ENCODE measurements at regions of chr1 and their contacts with region 1.

Region 1: GRCh38 chr1:8348777-8349491 is 31.0 kb downstream of the SLC45A1 start:
- DNase-seq: peak; percentile 56 to 58
- ATAC-seq: peak; percentile 60 to 75; a peak in 5 of 6 replicates
- H3K4me3 ChIP-seq: no peak overlapping the region
- H3K27ac ChIP-seq: peak overlapping the region; percentile 73 to 82; a peak in 5 of 6 replicates
- H3K4me1 ChIP-seq: peaks cover 17% of the 10 kb centered on the region
- CTCF ChIP-seq: peak; percentile 78
- EP300 ChIP-seq: no peak
- POLR2A ChIP-seq: no peak
- RAD21 ChIP-seq: peak; percentile 87 to 90

Region 2: GRCh38 chr1:7983086-7983778 is 365.7 kb before region 1 on chr1:
- CTCF ChIA-PET with region 1: interaction called, 75 read pairs
- POLR2A ChIA-PET with region 1: no interaction called
- DNase-seq: no peak
- ATAC-seq: no peak
- H3K4me3 ChIP-seq: no peak overlapping the region
- H3K27ac ChIP-seq: peak overlapping the region; percentile 63 to 72; a peak in 4 of 6 replicates
- H3K4me1 ChIP-seq: peaks cover 7% of the 10 kb centered on the region; the same call in 2 of the 3 replicates
- CTCF ChIP-seq: no peak
- EP300 ChIP-seq: no peak
- POLR2A ChIP-seq: no peak
- RAD21 ChIP-seq: no peak

Region 3: GRCh38 chr1:8323706-8324105 is 25.2 kb before region 1 on chr1:
- CTCF ChIA-PET with region 1: interaction called, 10 read pairs
- POLR2A ChIA-PET with region 1: no interaction called
- DNase-seq: no peak
- ATAC-seq: no peak
- H3K4me3 ChIP-seq: no peak overlapping the region
- H3K27ac ChIP-seq: no peak overlapping the region
- H3K4me1 ChIP-seq: 0 out of 3 replicates have a peak, but pooled peaks cover under 1% of the 10 kb centered on the region
- CTCF ChIP-seq: no peak
- EP300 ChIP-seq: no peak
- POLR2A ChIP-seq: no peak
- RAD21 ChIP-seq: no peak

Region 4: GRCh38 chr1:8364528-8365442 is 15.9 kb after region 1 on chr1:
- CTCF ChIA-PET with region 1: interaction called, 36 read pairs
- POLR2A ChIA-PET with region 1: no interaction called
- DNase-seq: no peak
- ATAC-seq: no peak
- H3K4me3 ChIP-seq: no peak overlapping the region
- H3K27ac ChIP-seq: no peak overlapping the region
- H3K4me1 ChIP-seq: peaks cover 4% of the 10 kb centered on the region; the same call in 1 of the 3 replicates
- CTCF ChIP-seq: no peak
- EP300 ChIP-seq: no peak
- POLR2A ChIP-seq: no peak
- RAD21 ChIP-seq: no peak